ENCODE measurements at regions of chr1 and their contacts with region 1.

Region 1: DNA sequence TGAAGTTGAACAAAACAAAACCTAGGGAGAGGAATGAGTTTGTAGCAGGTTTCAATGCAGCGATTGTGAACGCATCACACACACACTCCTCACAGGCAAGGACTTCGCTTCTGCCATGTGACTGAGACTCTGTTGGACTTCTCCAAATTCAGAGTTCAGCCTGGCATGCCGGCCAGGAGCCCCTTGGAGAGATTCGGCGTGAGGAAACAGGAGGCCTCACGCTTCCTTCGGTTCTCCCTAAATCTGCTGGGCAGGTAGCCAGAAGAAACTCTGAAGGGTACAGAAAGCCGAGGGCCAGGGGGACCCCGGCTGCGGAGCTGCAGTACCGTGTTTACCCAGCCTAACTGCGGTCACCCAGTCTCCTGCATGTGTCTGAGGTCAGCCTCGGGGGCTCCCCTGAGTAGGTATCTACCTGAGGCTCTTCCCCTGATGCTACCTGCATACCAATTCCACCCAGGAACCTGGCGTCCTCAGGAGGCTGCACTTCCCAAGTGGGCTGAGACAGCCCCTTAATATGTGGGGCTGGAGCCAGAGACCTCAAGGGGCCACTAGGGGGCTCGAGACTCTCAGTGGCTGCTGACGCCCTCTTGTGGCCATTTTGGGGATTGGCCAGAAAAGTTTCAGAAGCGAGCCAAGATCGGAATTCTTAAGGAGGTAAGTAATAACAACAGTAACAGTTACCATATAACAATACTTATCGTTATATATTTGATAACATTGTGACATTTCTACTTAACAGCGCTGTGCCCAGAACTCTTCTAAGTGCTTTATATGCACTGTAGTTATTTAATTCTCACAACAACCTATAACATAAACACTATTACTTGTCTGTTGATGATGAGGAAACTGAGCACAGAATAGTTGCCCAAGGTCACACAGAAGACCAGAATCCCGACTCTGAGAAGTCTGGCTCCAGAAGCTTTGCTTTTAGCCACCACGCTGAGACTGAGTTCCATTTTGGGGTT is 2.7 kb upstream of the ANXA9 start:
- DNase-seq: peak; percentile 85 to 90
- ATAC-seq: peak; percentile 48 to 67 (median 62)
- H3K4me3 ChIP-seq: peak overlapping the region; percentile 26
- H3K27ac ChIP-seq: peak overlapping the region; percentile 54
- H3K4me1 ChIP-seq: peaks cover 8% of the 10 kb centered on the region
- H3K27me3 ChIP-seq: no peaks in the 10 kb centered on the region
- CTCF ChIP-seq: peak; percentile 99

Region 2: GRCh38 chr1:150567717-150568593 is 411.4 kb before region 1 on chr1:
- intact Hi-C with region 1: loop called in 1 of 2 experiments (anchors 5 kb)
- DNase-seq: peak; percentile 82 to 92
- ATAC-seq: peak; percentile 62 to 83 (median 73)
- H3K4me3 ChIP-seq: peak overlapping the region; percentile 45
- H3K27ac ChIP-seq: peak overlapping the region; percentile 100
- H3K4me1 ChIP-seq: peaks cover 80% of the 10 kb centered on the region
- H3K27me3 ChIP-seq: no peaks in the 10 kb centered on the region
- CTCF ChIP-seq: no peak

Region 3: DNA sequence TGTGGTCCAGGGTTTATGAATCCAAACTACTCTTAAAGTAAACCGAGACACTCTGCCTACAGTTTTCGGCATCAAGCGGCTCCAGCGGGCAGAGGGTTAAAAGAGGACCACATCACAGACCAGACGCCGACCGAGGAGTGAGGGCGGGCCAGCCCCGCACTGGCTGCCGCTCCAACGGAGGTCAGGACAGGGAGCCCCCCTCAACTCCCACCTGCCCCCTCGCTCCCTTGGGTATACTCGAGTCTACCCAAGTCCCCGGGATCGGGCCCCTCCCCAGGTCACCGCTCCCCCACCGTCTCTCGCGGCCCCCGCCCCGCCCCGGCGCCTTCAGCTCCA is 103.3 kb before region 1 on chr1:
- intact Hi-C with region 1: loop called in 1 of 2 experiments (anchors 5 kb)
- DNase-seq: no peak
- ATAC-seq: peak; percentile 61 to 73 (median 68)
- H3K4me3 ChIP-seq: peak overlapping the region; percentile 86
- H3K27ac ChIP-seq: peak overlapping the region; percentile 94
- H3K4me1 ChIP-seq: peaks cover 12% of the 10 kb centered on the region
- H3K27me3 ChIP-seq: no peaks in the 10 kb centered on the region
- CTCF ChIP-seq: no peak

Region 4: GRCh38 chr1:151047925-151048645 is 68.7 kb after region 1 on chr1:
- intact Hi-C with region 1: no loop called
- DNase-seq: peak; percentile 72 to 87
- ATAC-seq: peak; percentile 83 to 90 (median 86)
- H3K4me3 ChIP-seq: peak overlapping the region; percentile 89
- H3K27ac ChIP-seq: peak overlapping the region; percentile 87
- H3K4me1 ChIP-seq: peaks cover 18% of the 10 kb centered on the region
- H3K27me3 ChIP-seq: no peaks in the 10 kb centered on the region
- CTCF ChIP-seq: peak; percentile 52

Measured in psoas muscle (tissue), 8 donors.